CD4-positive, alpha-beta T cell (primary cell): ENCODE measurements at regions of chr2 and their contacts with region 1.

Region 1: DNA sequence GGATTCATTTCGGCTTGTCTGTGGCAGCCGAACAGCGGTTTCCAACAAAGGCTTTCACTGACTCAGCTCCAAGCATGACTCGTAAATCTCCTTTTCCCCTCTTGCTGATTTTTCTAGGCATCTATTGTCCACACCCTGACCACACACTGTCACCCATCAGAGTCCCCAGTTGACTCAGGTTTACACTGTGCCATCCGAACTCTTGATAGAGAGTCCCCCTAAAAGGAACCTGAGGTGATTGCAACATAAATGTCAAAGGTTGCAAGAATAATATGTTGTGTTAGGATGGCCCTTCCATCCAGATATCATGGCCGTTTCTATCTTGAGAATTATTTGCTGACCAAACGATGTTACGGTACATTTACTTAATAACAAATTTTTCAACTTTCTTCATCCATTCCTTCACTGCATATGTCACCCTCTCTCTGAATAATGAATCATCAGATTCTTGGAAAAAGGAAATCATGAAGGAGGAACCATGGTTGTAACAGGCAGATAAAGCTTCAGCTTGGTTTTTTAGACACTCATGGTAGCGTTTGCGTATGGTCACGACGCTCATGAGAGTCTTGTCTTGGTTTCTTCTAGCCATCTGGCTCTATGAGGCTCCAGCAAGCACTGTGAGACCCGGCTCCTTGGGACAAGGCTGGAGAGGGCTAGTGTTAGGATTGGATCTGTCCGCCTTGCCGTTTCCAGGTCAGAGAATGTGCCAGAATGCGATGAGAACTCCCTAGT is 72.1 kb downstream of the NPAS2 start:
- DNase-seq: no peak
- ATAC-seq: no peak
- H3K4me3 ChIP-seq: no peak overlapping the region
- H3K4me3 Mint-ChIP-seq: no peak overlapping the region
- H3K27ac ChIP-seq: no peak overlapping the region
- H3K27ac Mint-ChIP-seq: no peak overlapping the region
- H3K4me1 ChIP-seq: no peaks in the 10 kb centered on the region
- H3K4me1 Mint-ChIP-seq: no peaks in the 10 kb centered on the region
- H3K27me3 ChIP-seq: no peaks in the 10 kb centered on the region
- H3K27me3 Mint-ChIP-seq: no peaks in the 10 kb centered on the region
- CTCF ChIP-seq: no peak

Region 2: GRCh38 chr2:100852999-100853908 is 38.8 kb before region 1 on chr2:
- CTCF ChIA-PET with region 1: no interaction called
- POLR2A ChIA-PET with region 1: no interaction called
- intact Hi-C with region 1: no loop called
- DNase-seq: no peak
- ATAC-seq: no peak
- H3K4me3 ChIP-seq: no peak overlapping the region
- H3K4me3 Mint-ChIP-seq: no peak overlapping the region
- H3K27ac ChIP-seq: no peak overlapping the region
- H3K27ac Mint-ChIP-seq: no peak overlapping the region
- H3K4me1 ChIP-seq: no peaks in the 10 kb centered on the region
- H3K4me1 Mint-ChIP-seq: no peaks in the 10 kb centered on the region
- H3K27me3 ChIP-seq: no peaks in the 10 kb centered on the region
- H3K27me3 Mint-ChIP-seq: no peaks in the 10 kb centered on the region
- CTCF ChIP-seq: no peak

Region 3: GRCh38 chr2:100905132-100905805 is 13.2 kb after region 1 on chr2:
- CTCF ChIA-PET with region 1: no interaction called
- POLR2A ChIA-PET with region 1: no interaction called
- intact Hi-C with region 1: loop called in 1 of 2 experiments (anchors 1 kb)
- DNase-seq: no peak
- ATAC-seq: no peak
- H3K4me3 ChIP-seq: no peak overlapping the region
- H3K4me3 Mint-ChIP-seq: no peak overlapping the region
- H3K27ac ChIP-seq: no peak overlapping the region
- H3K27ac Mint-ChIP-seq: no peak overlapping the region
- H3K4me1 ChIP-seq: no peaks in the 10 kb centered on the region
- H3K4me1 Mint-ChIP-seq: peaks cover 20% of the 10 kb centered on the region
- H3K27me3 ChIP-seq: no peaks in the 10 kb centered on the region
- H3K27me3 Mint-ChIP-seq: peaks cover 12% of the 10 kb centered on the region
- CTCF ChIP-seq: no peak